Mammary epithelial cell (primary cell): ENCODE measurements at regions of chr6 and their contacts with region 1.

Region 1: DNA sequence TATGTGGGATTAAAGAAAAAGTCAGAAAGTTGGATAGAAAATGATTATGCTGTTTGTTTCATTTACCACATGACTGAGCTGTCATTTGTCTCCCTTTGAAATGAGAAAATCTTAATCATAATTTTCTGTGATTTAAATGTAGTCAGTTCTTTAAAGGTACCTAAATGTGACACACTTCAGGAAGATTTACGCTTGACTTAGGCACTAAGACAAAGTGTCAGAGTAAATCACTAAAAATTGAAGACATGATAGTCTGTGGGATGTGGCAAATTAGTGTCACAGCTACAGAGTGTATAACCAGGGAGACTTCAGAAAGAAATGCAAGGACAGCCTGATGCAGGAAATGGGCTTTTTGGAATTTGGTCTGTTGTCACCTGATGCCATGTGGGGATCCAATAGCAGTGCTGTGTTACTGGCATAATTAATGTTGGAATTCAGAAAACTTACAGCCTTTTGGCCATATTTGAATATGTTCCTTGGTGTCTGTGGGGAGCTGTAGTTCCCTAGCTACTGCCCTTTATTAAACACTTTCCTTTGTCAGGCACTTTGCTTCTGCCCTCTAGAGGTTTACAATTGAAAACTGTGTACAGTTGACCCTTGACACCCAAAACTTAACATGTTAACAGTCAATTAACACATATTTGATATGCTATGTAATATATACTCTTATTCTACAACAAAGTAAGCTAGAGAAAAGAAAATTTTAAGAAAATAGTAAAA is 493.8 kb downstream of the UTRN start:
- DNase-seq: peak; percentile 6
- H3K4me3 ChIP-seq: no peak overlapping the region
- H3K27ac ChIP-seq: no peak overlapping the region
- H3K4me1 ChIP-seq: no peaks in the 10 kb centered on the region
- H3K27me3 ChIP-seq: no peaks in the 10 kb centered on the region
- CTCF ChIP-seq: peak; percentile 17 to 53

Region 2: GRCh38 chr6:144736763-144737162 is 42.2 kb before region 1 on chr6:
- CTCF ChIA-PET with region 1: no interaction called
- dilution Hi-C with region 1: loop called (anchors 5 kb)
- in situ Hi-C with region 1: no loop called
- intact Hi-C with region 1: no loop called
- DNase-seq: no peak
- H3K4me3 ChIP-seq: no peak overlapping the region
- H3K27ac ChIP-seq: no peak overlapping the region
- H3K4me1 ChIP-seq: no peaks in the 10 kb centered on the region
- H3K27me3 ChIP-seq: no peaks in the 10 kb centered on the region
- CTCF ChIP-seq: no peak